Activated CD4-positive, alpha-beta T cell treated with anti-CD3 and anti-CD28 coated beads, Interleukin-2, amount 10 ng/mL, durations not matched to agents 24 days and 14 days (primary cell): ENCODE measurements at regions of chr3 and their contacts with region 1.

Region 1: DNA sequence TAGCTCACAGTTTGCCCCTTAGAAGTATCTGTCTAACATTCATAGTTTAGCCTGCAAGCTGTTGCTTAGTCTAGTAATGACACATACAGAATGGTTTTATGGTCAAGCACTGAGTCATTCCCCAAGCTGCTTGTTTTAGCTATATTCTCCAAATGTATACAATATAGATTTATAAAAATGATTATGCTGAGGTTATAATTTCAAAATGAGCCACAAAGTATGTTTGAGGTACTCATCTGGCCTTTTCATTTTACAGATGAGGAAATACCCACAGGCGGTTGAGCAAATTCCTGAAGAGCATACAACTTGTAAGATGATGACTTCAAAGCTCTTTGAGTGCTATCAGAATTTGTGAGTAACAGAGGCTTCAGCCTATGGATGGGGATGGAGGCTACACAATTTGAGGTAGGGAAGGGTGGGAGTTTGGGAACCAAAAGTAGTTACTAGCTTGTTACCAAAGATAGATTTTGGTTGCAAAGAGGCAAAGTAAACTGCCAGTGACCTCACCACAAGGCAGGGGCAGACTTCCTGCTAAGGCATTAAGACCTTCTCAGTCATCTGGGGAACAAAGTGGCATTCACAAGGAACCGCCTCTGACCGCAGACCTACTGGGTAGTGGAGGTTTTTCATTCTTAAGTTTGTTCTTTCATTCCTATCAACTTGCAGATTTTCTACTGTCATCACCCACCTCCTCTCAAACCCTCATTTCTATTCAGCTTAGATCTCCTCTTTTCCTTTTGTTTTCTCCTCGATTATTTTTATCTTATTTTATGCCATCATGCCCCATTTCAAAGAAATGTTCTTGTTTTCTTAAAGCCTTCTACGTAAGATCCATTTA is 257.2 kb upstream of the NECTIN3 start:
- DNase-seq: peak; percentile 71
- H3K4me3 Mint-ChIP-seq: peak overlapping the region; percentile 17
- H3K27ac Mint-ChIP-seq: peak overlapping the region; percentile 56
- H3K4me1 Mint-ChIP-seq: peaks cover 10% of the 10 kb centered on the region
- H3K27me3 Mint-ChIP-seq: peaks cover 19% of the 10 kb centered on the region

Region 2: GRCh38 chr3:110955301-110955880 is 141.0 kb after region 1 on chr3:
- intact Hi-C with region 1: no loop called
- DNase-seq: no peak
- H3K4me3 Mint-ChIP-seq: no peak overlapping the region
- H3K27ac Mint-ChIP-seq: no peak overlapping the region
- H3K4me1 Mint-ChIP-seq: no peaks in the 10 kb centered on the region
- H3K27me3 Mint-ChIP-seq: no peaks in the 10 kb centered on the region

Region 3: DNA sequence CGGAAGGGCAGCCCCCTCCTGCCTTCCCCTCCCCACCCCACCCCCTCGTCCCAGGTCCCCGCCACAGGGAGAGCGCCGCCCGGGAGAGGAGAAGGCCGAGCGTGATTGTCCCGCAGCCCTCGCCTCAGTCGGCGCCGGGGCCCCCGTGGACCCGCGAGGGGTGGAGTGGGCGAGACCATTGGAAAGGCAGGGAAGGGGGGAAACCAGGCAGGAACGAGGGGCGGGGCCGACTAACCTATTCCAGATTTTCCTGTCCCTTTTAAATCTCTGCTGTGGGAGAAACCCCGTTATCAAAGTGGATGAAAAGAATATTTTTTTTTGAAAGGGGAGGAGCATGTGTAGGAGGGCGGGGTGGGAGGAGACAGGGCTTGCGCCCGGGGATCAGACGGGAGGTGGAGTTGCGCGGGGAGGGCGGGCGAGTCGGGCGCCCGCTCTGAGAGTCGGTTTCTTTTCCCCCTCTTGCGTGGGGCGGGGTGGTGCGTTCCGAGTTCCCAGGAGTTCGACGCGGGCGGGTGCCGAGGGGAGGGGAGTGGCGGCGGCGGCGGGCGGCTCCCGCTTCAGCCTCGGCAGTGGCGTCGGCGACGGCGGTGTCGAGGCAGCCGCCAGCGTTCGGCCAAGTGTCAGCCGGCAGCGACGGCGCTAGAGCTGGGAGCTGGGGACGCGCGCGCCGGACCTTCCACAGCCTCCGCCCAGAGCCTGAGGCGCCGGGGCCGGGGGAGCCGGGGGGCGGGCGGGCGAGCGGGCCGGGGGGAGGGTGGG is 257.0 kb after region 1 on chr3 and contains the start of gene NECTIN3:
- intact Hi-C with region 1: loop called (anchors 5 kb)
- DNase-seq: peak; percentile 94
- H3K4me3 Mint-ChIP-seq: peak within 1 kb of the TSS; percentile 94
- H3K27ac Mint-ChIP-seq: peak within 1 kb of the TSS; percentile 87
- H3K4me1 Mint-ChIP-seq: peaks cover 30% of the 10 kb centered on the region
- H3K27me3 Mint-ChIP-seq: peaks cover 55% of the 10 kb centered on the region
- total RNA-seq, gene NECTIN3: 3.0 and 4.4 TPM in 2 replicates

Region 4: DNA sequence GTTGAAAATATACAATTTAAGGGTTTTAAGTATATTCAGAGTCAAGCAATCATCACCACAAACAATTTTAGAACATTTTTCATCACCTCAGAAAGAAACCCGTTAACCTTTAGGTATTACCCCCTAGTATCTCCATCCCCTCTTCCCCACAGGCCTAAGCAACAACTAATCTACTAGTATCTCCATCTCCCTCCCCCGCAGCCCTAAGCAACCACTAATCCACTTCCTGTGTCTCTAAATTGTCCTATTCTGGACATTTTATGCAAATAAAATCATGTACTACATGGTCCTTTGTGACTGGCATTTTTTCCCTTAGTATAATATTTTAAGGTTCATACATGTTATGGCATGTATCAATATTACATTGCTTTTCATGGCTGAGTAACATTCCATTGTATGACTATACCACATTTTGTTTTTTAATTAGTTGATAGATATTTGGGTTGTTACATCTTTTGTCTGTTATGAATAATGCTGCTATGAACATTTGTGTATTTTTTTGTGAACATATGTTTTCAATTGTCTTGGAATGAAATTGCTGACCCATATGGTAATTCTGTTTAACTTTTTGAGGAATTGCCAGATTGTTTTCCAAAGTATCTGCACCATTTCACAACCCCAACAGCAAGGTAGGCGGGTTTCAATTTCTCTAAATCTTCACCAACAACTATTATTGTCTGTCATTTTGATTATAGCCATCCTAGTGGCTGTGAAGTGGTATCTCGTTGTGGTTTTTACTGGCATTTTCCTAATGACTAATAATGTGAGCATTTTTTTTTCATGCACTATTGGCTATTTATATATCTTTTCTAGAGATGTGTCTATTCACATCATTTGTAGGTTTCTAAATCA is 512.0 kb after region 1 on chr3:
- intact Hi-C with region 1: loop called (anchors 10 kb)
- DNase-seq: no peak
- H3K4me3 Mint-ChIP-seq: peak overlapping the region; percentile 3
- H3K27ac Mint-ChIP-seq: peak overlapping the region; percentile 67
- H3K4me1 Mint-ChIP-seq: peaks cover 29% of the 10 kb centered on the region
- H3K27me3 Mint-ChIP-seq: no peaks in the 10 kb centered on the region

Region 5: GRCh38 chr3:111547631-111548030 is 733.2 kb after region 1 on chr3:
- intact Hi-C with region 1: loop called (anchors 2 kb)
- DNase-seq: peak; percentile 87
- H3K4me3 Mint-ChIP-seq: no peak overlapping the region
- H3K27ac Mint-ChIP-seq: no peak overlapping the region
- H3K4me1 Mint-ChIP-seq: peaks cover 46% of the 10 kb centered on the region
- H3K27me3 Mint-ChIP-seq: no peaks in the 10 kb centered on the region

Region 6: DNA sequence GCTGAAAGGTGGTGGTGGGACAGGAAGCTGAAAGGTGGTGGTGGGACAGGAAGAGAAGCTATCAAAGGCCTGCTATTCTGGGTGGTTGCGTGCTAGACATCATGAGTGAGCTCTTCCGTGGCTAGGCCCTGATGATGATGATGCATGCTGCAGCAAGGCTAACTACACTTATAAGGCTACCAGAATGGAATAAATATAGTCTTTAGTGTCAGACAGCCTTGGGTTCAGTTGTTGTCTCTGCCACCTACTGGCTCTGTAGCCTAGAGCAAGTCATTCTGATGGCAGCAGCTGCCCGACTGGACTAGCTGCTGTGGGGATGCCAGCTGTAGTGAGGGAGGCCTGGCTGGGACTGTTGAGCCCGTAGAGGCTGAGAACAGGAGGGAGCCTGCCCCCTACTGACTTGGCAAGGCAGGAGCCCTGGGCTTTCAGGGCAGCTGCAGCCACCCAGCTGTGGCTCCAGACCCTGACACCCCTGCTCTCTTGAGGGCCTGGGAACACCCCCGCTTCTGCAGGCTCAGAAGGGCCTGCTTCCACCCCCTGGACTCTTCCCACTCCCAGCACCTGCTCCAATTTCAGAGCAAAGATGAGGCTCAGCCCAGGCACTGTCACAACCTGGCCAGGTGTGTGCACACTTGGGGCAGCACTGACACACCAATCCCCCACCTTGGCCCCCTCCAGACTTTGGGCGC is 802.2 kb after region 1 on chr3:
- intact Hi-C with region 1: loop called (anchors 10 kb)
- DNase-seq: peak; percentile 88
- H3K4me3 Mint-ChIP-seq: peak overlapping the region; percentile 59
- H3K27ac Mint-ChIP-seq: peak overlapping the region; percentile 92
- H3K4me1 Mint-ChIP-seq: peaks cover 71% of the 10 kb centered on the region
- H3K27me3 Mint-ChIP-seq: no peaks in the 10 kb centered on the region

Region 7: DNA sequence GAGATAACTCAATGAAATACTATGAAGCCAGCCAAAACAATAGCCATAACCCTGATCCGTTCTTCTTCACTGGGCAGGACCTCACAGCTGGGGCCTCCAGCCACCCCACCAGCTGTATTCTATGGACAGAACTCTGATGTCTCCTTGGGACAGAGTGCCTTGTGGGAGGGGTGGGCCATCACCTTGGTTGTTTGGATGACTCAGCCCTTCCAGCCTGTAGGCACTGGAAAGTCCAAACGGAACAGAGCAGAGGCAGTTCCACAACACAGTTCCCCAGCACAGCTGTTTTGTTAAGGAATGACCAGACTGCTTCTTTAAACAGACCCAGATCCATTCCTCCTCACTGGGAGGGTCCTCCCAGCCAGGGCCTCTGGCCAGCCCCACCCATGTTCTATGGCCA is 812.7 kb after region 1 on chr3:
- intact Hi-C with region 1: no loop called
- DNase-seq: no peak
- H3K4me3 Mint-ChIP-seq: no peak overlapping the region
- H3K27ac Mint-ChIP-seq: no peak overlapping the region
- H3K4me1 Mint-ChIP-seq: peaks cover 6% of the 10 kb centered on the region
- H3K27me3 Mint-ChIP-seq: no peaks in the 10 kb centered on the region

Region 8: DNA sequence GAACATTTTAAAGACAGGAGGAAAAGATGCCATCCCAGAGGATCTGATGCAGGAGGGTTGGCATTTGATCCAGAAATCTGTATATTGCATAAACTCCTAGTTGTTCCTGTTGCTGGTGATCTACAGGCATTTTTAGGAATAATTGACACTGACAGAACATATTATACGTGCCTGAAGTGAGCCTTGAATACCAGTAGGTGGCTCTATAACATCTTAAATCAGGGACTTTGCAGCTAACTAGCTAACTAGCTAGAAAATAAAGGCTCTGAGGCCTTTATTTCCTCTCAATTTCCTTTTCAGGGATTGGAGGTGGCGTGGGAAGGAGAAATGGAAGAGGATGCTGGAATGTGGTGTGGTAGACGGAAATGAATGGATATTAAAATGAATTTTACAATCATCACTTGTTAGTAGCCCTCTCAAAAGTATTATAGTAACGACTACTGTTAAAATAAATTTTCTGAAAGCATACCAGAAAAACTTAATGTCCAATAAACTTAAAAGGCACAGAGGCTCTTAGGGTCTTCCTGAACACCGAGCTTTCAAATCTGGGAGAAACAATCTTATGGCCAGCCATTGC is 854.6 kb after region 1 on chr3:
- intact Hi-C with region 1: loop called (anchors 2 kb)
- DNase-seq: peak; percentile 69
- H3K4me3 Mint-ChIP-seq: peak overlapping the region; percentile 22
- H3K27ac Mint-ChIP-seq: peak overlapping the region; percentile 73
- H3K4me1 Mint-ChIP-seq: peaks cover 69% of the 10 kb centered on the region
- H3K27me3 Mint-ChIP-seq: no peaks in the 10 kb centered on the region